Activated naive CD4-positive, alpha-beta T cell treated with anti-CD3 and anti-CD28 coated beads for 36 hours (primary cell): ENCODE measurements at regions of chr15 and their contacts with region 1.

Region 1: DNA sequence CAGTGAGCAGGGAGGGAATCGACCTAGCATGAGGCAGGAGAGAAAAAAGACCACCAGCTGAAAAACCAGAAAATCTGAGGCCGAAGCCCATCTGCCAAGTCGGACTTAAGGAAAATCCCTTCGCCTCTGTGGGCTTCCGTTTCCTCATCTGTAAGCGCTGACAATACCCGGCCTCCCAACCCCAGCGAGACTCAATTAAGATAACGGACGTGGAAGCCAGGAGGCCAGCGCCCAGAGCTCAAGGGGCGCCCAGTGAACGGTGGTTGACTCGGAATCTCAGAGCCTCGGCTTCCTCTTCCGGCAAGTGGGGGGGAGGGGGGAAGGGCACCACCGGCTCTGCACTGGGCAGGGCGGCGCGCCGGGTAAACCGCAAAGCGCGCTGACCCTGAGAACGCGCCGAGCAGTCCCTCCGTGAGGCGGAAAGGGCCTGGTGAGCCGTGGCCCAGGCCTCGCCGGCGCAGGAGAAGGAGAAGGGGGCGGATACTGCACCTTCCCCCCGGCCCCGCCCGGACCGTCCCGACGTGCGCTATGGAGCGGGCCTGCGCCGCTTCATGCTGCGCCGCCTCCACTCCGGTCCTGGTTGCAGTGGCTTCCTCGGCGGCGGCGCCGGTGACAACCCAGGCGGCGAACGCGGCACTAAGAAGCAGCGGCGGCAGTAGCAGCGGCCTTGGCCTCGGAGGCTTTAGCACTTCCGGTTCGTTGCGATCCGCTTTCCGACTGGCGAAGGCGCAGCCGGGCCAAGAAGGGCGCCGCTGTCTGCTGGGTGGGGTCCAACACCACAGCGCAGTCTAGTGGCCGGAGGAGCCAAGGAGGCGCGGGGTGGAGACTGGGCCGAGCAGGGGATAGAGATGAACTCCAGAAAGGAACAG is at the start of gene DPP8:
- DNase-seq: peak; percentile 96
- H3K4me3 Mint-ChIP-seq: peak within 1 kb of the TSS; percentile 95
- H3K27ac Mint-ChIP-seq: peak within 1 kb of the TSS; percentile 88
- H3K4me1 Mint-ChIP-seq: peaks cover 35% of the 10 kb centered on the region
- H3K27me3 Mint-ChIP-seq: no peaks in the 10 kb centered on the region
- total RNA-seq, gene DPP8: 23.0 to 24.9 TPM

Region 2: GRCh38 chr15:65304389-65305144 is 212.7 kb before region 1 on chr15 and contains the start of gene RNU5B-1:
- CTCF ChIA-PET with region 1: no interaction called
- intact Hi-C with region 1: loop called (anchors 1 kb)
- DNase-seq: peak; percentile 86
- H3K4me3 Mint-ChIP-seq: peak within 1 kb of the TSS; percentile 89
- H3K27ac Mint-ChIP-seq: peak within 1 kb of the TSS; percentile 97
- H3K4me1 Mint-ChIP-seq: peaks cover 24% of the 10 kb centered on the region
- H3K27me3 Mint-ChIP-seq: peaks cover 4% of the 10 kb centered on the region
- total RNA-seq, gene RNU5B-1: not detected

Region 3: DNA sequence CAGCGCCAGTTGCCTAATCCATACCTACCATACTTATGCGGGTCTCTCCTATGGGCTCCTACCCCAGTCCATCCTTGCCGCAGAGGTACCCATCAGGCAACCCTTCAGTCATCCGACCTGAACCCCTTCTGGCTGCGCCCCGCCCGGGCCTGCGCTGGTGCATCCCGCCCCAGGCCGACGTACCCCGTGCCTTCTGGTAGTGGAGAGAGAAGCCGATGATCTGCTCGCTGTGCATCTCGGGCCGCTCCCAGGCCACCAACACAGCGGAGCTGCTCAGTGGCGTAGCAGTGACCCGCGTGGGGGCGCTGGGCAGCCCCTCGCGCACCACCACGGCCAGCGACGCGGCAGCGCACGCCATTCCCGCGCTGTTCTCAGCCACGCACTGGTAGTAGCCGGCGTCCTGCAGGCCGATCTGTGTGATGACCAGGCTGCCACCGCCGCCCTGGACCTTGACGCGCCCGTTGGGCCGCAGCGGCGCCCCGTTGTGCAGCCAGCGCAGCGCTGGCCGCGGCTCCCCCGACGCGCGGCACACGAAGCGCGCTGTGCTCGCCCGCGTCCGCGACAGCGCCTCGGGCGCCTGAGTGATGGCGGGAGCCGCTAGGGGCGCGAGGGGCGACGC is 121.6 kb before region 1 on chr15:
- CTCF ChIA-PET with region 1: no interaction called
- intact Hi-C with region 1: no loop called
- DNase-seq: no peak
- H3K4me3 Mint-ChIP-seq: no peak overlapping the region
- H3K27ac Mint-ChIP-seq: no peak overlapping the region
- H3K4me1 Mint-ChIP-seq: peaks cover 6% of the 10 kb centered on the region
- H3K27me3 Mint-ChIP-seq: peaks cover 40% of the 10 kb centered on the region

Region 4: DNA sequence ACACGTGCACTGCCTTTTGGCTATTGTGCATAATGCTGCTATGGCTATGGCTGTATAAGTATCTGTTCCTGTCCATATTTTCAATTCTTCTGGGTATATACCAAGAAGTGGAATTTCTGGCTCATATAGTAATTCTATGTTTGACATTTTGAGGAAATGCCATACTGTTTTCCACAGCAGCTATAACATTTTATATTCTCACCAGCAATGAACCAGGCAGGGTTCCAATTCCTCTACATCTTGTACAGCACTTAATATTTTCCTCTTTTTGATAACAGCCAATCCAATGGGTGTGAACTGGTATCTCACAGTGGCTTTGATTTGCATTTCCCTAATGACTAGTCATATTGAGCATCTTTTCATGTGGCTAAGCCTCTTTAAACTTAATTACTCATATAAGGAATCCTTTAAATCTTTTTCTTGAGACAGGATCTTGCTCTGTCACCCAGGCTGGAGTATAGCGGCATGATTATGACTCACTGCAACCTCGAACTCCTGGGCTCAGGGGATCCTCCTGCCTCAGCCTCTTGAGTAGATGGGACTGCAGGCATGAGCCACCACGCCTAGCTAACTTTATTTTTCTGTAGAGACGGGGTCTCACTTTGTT is 56.4 kb before region 1 on chr15:
- CTCF ChIA-PET with region 1: interaction called, 4 read pairs
- intact Hi-C with region 1: loop called (anchors 2 kb)
- DNase-seq: peak; percentile 72
- H3K4me3 Mint-ChIP-seq: no peak overlapping the region
- H3K27ac Mint-ChIP-seq: no peak overlapping the region
- H3K4me1 Mint-ChIP-seq: peaks cover 15% of the 10 kb centered on the region
- H3K27me3 Mint-ChIP-seq: no peaks in the 10 kb centered on the region

Region 5: GRCh38 chr15:65530314-65531122 is 13.3 kb after region 1 on chr15 and contains the start of gene HACD3:
- CTCF ChIA-PET with region 1: interaction called, 10 read pairs
- intact Hi-C with region 1: loop called (anchors 1 kb)
- DNase-seq: peak; percentile 89
- H3K4me3 Mint-ChIP-seq: peak within 1 kb of the TSS; percentile 83
- H3K27ac Mint-ChIP-seq: peak within 1 kb of the TSS; percentile 69
- H3K4me1 Mint-ChIP-seq: peaks cover 32% of the 10 kb centered on the region
- H3K27me3 Mint-ChIP-seq: no peaks in the 10 kb centered on the region
- total RNA-seq, gene HACD3: 29.1 to 30.1 TPM

Region 6: DNA sequence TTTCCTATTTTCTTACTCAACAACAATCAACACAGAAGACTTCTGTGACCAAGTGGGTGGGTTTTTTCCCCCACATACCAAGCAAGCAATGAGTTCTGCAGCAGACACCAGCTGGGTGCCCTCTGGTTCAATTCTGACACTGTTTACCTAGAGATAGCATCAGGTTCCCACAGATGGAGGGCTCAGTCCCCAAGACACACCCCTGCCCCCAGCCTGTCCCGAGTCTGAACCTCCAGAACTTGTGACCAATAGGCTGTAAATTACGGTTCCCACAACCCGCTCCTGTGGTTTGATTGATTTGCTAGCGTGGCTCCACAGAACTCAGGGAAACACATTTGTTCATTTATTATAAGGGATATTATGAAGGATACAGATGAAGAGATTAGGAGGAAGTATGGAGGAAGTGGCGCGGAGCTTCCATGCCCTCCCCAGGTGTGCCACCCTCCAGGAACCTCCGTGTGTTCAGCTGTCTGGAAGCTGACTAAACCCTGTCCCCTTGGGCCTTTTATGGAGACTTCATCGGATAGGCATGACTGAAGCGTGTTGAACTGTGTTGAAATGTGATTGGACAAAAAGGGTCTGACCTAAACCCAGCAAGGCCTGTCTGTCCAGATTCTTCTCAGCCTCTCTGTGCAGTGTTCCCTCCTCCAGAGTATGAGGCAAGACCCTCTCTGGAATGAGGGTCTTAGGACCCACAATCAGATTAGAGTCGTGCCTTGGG is 44.5 kb after region 1 on chr15:
- CTCF ChIA-PET with region 1: no interaction called
- intact Hi-C with region 1: no loop called
- DNase-seq: no peak
- H3K4me3 Mint-ChIP-seq: no peak overlapping the region
- H3K27ac Mint-ChIP-seq: no peak overlapping the region
- H3K4me1 Mint-ChIP-seq: no peaks in the 10 kb centered on the region
- H3K27me3 Mint-ChIP-seq: no peaks in the 10 kb centered on the region

Region 7: GRCh38 chr15:65610871-65611718 is 93.9 kb after region 1 on chr15 and contains the start of gene INTS14:
- CTCF ChIA-PET with region 1: no interaction called
- intact Hi-C with region 1: loop called (anchors 1 kb)
- DNase-seq: peak; percentile 98
- H3K4me3 Mint-ChIP-seq: peak within 1 kb of the TSS; percentile 98
- H3K27ac Mint-ChIP-seq: peak within 1 kb of the TSS; percentile 96
- H3K4me1 Mint-ChIP-seq: peaks cover 45% of the 10 kb centered on the region
- H3K27me3 Mint-ChIP-seq: no peaks in the 10 kb centered on the region
- total RNA-seq, gene INTS14: 41.2 to 43.4 TPM

Region 8: DNA sequence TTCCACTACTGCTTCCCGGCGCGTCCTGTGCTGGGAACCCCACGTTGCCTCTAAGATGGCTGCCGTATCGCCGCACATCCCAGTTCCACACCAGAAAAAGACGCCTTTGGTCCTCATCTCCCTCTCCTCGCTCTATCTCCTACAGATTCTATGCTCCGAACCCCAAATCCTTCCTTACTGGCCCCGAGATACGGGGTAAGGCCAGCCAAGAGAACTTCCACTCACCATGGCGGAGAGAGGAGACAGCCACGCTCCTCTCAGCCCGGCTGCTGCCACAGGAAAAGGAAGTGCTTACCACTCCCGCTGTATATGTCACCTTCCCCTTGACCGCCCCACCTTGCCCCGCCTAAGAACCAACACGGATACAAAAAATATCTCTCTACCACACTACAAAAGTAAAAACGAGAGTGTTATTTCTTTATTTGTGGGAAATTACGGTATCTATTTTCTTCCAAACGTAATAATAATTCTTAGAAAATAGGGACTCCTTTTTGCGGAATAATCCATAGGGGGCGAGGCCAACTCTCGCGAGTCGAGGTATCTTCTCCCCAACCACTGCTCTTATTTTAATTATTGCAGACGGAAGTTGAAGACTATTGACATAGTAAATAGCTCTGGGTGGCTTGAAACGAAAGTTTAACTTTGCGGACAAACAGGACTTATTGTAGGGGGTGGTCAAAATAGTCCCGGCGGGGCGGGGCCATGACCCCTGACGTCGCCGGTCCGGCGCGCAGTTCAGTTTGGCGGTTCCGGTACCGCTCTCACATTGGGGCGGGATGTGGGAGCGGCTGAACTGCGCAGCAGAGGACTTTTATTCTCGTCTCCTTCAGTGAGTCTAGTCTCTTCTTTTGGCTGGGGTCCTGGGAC is 987.6 kb after region 1 on chr15 and contains the starts of genes RPL4 and ZWILCH:
- CTCF ChIA-PET with region 1: no interaction called
- intact Hi-C with region 1: loop called (anchors 1 kb)
- DNase-seq: peak; percentile 77
- H3K4me3 Mint-ChIP-seq: peak within 1 kb of the TSS; percentile 99
- H3K27ac Mint-ChIP-seq: peak within 1 kb of the TSS; percentile 98
- H3K4me1 Mint-ChIP-seq: peaks cover 50% of the 10 kb centered on the region
- H3K27me3 Mint-ChIP-seq: no peaks in the 10 kb centered on the region
- total RNA-seq, gene RPL4: 6,298 to 6,391 TPM
- total RNA-seq, gene ZWILCH: 21.6 to 23.3 TPM